Activated naive CD4-positive, alpha-beta T cell treated with anti-CD3 and anti-CD28 coated beads for 36 hours (primary cell): ENCODE measurements at regions of chr22 and their contacts with region 1.

Region 1: GRCh38 chr22:21972293-21972779 is 10.3 kb downstream of the TOP3B start:
- DNase-seq: peak; percentile 60
- H3K4me3 Mint-ChIP-seq: no peak overlapping the region
- H3K27ac Mint-ChIP-seq: no peak overlapping the region
- H3K4me1 Mint-ChIP-seq: peaks cover 2% of the 10 kb centered on the region
- H3K27me3 Mint-ChIP-seq: no peaks in the 10 kb centered on the region

Region 2: DNA sequence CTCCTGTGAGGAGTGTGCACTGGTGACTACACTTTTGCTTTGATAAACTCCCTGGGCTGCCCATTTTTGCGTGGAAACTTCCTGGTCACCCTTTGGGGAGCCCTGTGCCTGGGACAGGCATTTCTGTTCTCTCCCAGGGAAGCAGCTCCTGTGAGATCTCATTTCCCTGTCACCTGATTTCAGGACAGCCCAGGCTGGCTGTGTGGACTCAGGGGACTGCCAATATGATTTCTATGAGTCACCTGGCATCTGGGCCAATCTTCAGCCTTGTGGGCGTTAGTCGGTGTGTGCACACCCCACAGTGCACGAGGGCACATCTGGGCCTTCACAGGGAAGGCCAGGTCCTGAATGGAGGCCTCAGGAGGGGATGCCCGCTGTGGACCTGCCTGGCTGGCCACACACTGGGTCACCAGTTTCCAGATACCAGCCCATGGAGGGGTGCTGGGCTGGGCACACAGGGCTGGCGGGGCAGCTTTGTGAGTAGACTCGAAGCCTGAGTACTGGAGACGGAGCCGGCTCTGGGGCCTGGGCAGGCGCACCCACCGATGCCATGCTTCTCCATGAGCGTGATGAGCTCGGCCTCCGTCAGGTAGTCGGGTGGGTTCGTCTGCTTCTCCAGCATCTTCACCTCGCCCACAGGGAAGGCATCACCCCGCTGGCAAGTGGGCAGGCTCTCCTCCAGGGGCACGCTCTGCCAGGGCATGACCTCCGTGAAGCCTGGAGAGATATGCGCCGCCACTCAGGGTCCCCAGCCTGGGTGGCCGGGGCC is 10.3 kb before region 1 on chr22:
- CTCF ChIA-PET with region 1: interaction called, 12 read pairs
- intact Hi-C with region 1: no loop called
- DNase-seq: no peak
- H3K4me3 Mint-ChIP-seq: no peak overlapping the region
- H3K27ac Mint-ChIP-seq: no peak overlapping the region
- H3K4me1 Mint-ChIP-seq: no peaks in the 10 kb centered on the region
- H3K27me3 Mint-ChIP-seq: no peaks in the 10 kb centered on the region

Region 3: DNA sequence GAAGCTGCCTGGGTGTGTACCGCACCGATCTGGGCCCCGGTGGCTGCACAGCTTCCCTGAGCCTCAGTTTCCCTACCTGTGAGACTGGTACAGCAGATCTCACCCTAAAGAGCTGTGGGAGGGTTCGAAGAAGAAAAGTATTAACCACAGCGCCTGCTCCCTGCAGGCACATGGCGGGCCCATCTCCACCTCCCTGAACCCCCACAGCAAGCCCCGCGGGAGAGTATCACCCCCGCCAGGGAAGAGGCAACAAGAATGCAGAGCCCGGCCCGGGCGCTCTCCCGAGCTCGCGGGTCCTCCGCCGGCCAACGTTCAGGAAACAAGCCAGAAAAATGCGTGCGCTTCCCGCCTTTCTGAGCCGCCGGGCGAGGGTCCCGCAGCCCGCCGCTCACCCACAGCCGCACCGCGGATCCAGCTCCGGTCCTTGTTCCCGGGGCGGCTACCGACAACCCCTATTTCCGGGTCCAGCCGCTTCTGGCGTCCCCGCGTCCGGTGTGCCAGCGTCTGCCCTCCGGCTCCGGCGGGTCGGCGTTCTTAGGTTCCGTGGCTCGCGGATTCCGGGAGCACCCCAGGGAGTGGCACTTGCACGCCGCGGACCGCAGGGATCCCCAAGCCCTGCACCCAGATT is 10.1 kb after region 1 on chr22 and contains the start of gene TOP3B:
- CTCF ChIA-PET with region 1: interaction called, 32 read pairs
- intact Hi-C with region 1: no loop called
- DNase-seq: peak; percentile 90
- H3K4me3 Mint-ChIP-seq: peak within 1 kb of the TSS; percentile 84
- H3K27ac Mint-ChIP-seq: peak within 1 kb of the TSS; percentile 81
- H3K4me1 Mint-ChIP-seq: peaks cover 36% of the 10 kb centered on the region
- H3K27me3 Mint-ChIP-seq: no peaks in the 10 kb centered on the region
- total RNA-seq, gene TOP3B: 41.2 to 41.4 TPM

Region 4: DNA sequence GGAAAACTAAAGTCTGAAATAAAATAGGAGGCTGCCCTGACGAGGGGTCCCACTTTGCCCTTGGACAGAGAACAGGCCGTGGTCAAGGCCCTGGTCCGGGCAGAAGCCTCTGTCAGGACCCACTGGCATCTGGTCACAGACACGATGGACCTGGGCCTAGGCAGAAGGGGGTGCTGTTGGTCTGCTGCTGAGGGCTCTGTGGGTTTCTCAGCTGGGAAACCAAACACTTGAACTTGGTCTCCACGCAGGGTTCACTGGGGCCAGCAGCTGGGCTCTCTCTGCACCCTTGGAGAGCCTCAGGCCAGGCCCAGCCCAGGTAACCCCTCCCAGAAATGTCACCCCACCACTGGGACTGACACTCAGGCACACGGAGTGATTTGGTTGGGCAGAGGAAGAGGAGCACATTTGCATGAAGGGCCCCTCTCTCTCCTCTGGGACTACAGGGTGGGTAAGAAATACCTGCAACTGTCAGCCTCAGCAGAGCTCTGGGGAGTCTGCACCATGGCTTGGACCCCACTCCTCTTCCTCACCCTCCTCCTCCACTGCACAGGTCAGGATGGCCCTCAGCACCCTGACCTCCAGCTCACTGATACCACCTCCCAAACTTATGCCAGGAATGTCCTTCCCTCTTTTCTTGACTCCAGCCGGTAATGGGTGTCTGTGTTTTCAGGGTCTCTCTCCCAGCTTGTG is 58.3 kb after region 1 on chr22:
- CTCF ChIA-PET with region 1: no interaction called
- intact Hi-C with region 1: no loop called
- DNase-seq: no peak
- H3K4me3 Mint-ChIP-seq: no peak overlapping the region
- H3K27ac Mint-ChIP-seq: no peak overlapping the region
- H3K4me1 Mint-ChIP-seq: no peaks in the 10 kb centered on the region
- H3K27me3 Mint-ChIP-seq: peaks cover 2% of the 10 kb centered on the region